Adrenal gland (tissue), 19 donors: ENCODE measurements at regions of chr5 and their contacts with region 1.

Region 1: DNA sequence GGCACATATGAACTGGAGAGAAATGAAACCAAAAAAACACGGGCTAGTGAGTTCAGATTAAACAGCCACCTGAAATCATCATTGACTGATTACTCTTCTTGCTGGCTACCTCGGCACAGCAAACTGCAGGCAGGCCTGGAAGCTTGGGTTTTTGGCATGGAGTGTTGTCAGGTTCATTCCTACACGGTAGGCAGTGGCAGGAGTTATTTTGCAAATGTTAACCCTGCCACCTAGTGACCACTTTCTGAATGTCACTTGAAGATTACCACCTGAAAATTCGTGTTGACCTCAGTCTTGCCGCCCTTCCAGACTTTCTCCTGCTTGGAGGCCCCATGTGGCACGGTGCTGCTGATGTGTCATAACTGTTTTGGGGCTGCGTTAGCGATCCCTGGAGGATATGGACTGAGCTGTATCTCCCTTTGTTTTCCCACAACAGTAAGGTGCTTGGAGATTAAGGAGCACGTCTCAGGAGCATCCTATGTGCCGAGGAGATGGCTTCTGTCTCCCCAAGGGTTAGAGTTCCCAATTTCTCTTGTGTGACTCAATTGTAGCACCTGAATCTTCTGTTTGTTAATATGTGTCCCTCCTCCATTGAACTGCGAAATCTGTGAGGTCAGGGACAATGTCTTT is 12.7 kb upstream of the CD180 start:
- DNase-seq: peak; percentile 77 to 86 (median 81)
- H3K4me3 ChIP-seq: no peak overlapping the region
- H3K27ac ChIP-seq: no peak overlapping the region
- H3K4me1 ChIP-seq: no peaks in the 10 kb centered on the region
- H3K27me3 ChIP-seq: no peaks in the 10 kb centered on the region
- CTCF ChIP-seq: peak; percentile 48 to 91 (median 80)
- POLR2A ChIP-seq: no peak

Region 2: GRCh38 chr5:67165526-67166459 is 43.5 kb before region 1 on chr5:
- intact Hi-C with region 1: loop called (anchors 5 kb)
- DNase-seq: peak; percentile 84 to 95 (median 91)
- H3K4me3 ChIP-seq: peak overlapping the region in 1 of 4 donors; percentile 55
- H3K27ac ChIP-seq: peak overlapping the region in 4 of 5 donors; percentile 53 to 87 (median 83)
- H3K4me1 ChIP-seq: peaks cover 11 to 13% of the 10 kb centered on the region in 2 donors
- H3K27me3 ChIP-seq: no peaks in the 10 kb centered on the region
- CTCF ChIP-seq: peak; percentile 71 to 93 (median 82)
- POLR2A ChIP-seq: no peak